ENCODE measurements at regions of chr16 and their contacts with region 1.

Region 1: DNA sequence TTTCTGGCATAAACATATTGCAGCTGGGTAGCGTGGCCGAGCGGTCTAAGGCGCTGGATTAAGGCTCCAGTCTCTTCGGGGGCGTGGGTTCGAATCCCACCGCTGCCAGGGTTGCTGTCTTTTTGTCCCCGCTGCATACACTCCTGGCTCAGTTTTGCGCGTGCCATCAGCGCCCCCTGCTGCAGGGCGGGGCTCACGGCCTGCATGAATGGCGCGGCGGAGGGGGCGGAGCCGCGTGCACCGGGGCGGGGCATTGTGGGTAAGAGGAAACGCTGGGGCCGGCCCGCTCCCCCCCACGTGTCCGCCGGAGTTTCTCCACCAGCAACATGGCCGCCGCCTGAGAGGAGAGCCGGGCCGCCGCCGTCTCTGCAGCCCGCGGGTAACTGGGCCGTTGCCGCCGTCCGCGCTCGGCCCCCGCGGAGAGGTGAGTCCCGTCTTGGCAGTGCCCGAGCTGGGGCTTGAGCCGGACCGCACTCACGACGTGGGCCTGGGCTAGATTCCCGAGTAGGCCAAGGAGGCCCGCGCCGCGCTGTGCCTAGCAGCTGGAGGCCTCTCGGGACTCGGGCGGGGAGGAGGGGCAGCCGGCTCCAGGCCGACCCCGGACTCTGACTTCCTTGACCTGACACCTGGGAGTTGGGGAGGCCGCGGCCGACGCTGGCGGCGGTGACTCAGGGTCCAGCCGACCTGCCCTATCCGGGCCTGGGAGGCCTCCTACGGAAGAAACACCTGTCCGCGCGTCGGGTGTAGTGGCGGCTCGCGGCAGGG is at the start of gene POLR3E:
- DNase-seq: peak; percentile 100
- H3K4me3 Mint-ChIP-seq: peak within 1 kb of the TSS; percentile 94
- H3K27ac Mint-ChIP-seq: peak within 1 kb of the TSS; percentile 90
- H3K4me1 Mint-ChIP-seq: peaks cover 45% of the 10 kb centered on the region
- H3K27me3 Mint-ChIP-seq: peaks cover 3% of the 10 kb centered on the region
- total RNA-seq, gene POLR3E: 107 and 111 TPM in 2 replicates

Region 2: GRCh38 chr16:20971401-20971800 is 1325.9 kb before region 1 on chr16:
- intact Hi-C with region 1: no loop called
- DNase-seq: no peak
- H3K4me3 Mint-ChIP-seq: no peak overlapping the region
- H3K27ac Mint-ChIP-seq: no peak overlapping the region
- H3K4me1 Mint-ChIP-seq: no peaks in the 10 kb centered on the region
- H3K27me3 Mint-ChIP-seq: peaks cover 11% of the 10 kb centered on the region

Region 3: DNA sequence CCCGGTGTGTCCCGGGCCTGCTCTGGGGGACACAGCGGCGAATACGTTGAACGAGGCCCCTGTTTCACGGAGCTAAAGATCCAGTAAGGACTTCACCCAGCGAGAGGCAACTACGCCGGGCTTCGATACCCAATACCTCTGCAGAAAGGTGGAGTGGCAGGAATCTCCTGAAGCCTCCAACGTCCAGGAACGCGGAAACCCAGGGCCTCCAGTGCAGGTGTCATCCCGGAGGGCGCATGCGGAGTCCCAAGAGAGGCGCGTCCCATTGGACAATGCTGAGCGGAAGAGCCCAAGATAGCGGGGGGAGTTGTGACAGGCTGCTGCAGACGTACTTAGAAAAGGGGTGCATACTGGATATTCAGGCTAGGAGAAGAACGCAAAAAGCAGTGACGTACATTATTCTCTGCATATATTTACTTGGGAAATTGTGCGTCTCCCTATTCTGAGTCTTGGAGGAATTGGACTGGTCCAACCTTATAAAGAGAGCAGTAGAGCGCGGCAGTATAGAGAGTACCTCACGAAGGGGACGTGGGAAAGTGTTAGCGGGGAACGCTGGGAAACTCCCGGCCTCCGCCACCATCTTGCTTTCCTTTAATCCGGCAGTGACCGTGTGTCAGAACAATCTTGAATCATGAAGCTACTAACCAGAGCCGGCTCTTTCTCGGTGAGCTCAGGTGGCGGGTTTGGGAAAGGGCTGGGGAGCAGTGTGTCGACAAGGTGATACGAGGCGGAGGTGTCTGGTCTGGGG is 344.3 kb before region 1 on chr16 and contains the start of gene UQCRC2:
- intact Hi-C with region 1: loop called (anchors 1 kb)
- DNase-seq: peak; percentile 85
- H3K4me3 Mint-ChIP-seq: peak within 1 kb of the TSS; percentile 99
- H3K27ac Mint-ChIP-seq: peak within 1 kb of the TSS; percentile 95
- H3K4me1 Mint-ChIP-seq: peaks cover 50% of the 10 kb centered on the region
- H3K27me3 Mint-ChIP-seq: no peaks in the 10 kb centered on the region
- total RNA-seq, gene UQCRC2: 235 and 260 TPM in 2 replicates

Region 4: GRCh38 chr16:22007509-22008214 is 289.6 kb before region 1 on chr16 and contains the start of gene MOSMO:
- intact Hi-C with region 1: loop called (anchors 1 kb)
- DNase-seq: peak; percentile 62
- H3K4me3 Mint-ChIP-seq: peak within 1 kb of the TSS; percentile 92
- H3K27ac Mint-ChIP-seq: peak within 1 kb of the TSS; percentile 79
- H3K4me1 Mint-ChIP-seq: peaks cover 49% of the 10 kb centered on the region
- H3K27me3 Mint-ChIP-seq: peaks cover 10% of the 10 kb centered on the region
- total RNA-seq, gene MOSMO: 12.7 and 16.3 TPM in 2 replicates

Region 5: GRCh38 chr16:22141746-22142145 is 155.6 kb before region 1 on chr16:
- intact Hi-C with region 1: no loop called
- DNase-seq: no peak
- H3K4me3 Mint-ChIP-seq: no peak overlapping the region
- H3K27ac Mint-ChIP-seq: no peak overlapping the region
- H3K4me1 Mint-ChIP-seq: no peaks in the 10 kb centered on the region
- H3K27me3 Mint-ChIP-seq: peaks cover 5% of the 10 kb centered on the region

Region 6: GRCh38 chr16:22232277-22233042 is 64.8 kb before region 1 on chr16:
- intact Hi-C with region 1: loop called (anchors 2 kb)
- DNase-seq: no peak
- H3K4me3 Mint-ChIP-seq: peak overlapping the region; percentile 13
- H3K27ac Mint-ChIP-seq: peak overlapping the region; percentile 14
- H3K4me1 Mint-ChIP-seq: peaks cover 13% of the 10 kb centered on the region
- H3K27me3 Mint-ChIP-seq: no peaks in the 10 kb centered on the region

Region 7: DNA sequence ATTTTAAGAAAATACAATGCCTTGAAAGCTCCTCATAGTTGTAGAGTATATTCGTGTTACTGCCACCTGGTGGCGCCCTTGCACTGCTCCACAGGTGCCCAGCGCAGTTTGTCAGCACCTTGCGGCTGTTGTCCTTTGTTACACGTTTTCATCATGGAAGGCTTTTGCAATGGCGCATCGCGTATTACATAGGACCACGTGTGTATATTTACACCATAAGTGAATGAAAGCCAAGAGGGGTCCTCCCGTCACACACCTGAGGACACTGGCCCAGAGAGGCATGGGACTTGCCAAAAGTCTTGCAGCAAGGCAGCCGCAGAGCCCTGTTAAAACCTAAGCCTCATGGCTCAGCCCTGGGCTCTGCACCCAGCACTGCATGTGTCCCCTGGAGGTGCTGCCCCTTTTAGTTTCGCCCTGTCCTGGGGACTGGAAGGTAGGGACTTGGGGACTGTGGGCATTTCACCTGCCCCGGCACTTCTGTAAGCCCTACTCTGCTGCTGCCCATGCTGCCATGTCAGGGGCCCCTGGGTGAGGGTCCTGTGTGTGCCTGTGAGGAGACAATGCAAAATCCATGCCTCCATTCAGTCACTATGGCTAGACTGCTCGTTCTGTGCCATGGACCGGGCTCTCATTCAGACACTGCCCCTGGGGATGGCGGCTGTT is 24.2 kb after region 1 on chr16:
- intact Hi-C with region 1: loop called (anchors 2 kb)
- DNase-seq: peak; percentile 57
- H3K4me3 Mint-ChIP-seq: no peak overlapping the region
- H3K27ac Mint-ChIP-seq: peak overlapping the region; percentile 48
- H3K4me1 Mint-ChIP-seq: no peaks in the 10 kb centered on the region
- H3K27me3 Mint-ChIP-seq: no peaks in the 10 kb centered on the region

Region 8: GRCh38 chr16:22374311-22375116 is 77.2 kb after region 1 on chr16 and contains the start of gene CDR2:
- intact Hi-C with region 1: loop called (anchors 1 kb)
- DNase-seq: peak; percentile 99
- H3K4me3 Mint-ChIP-seq: peak within 1 kb of the TSS; percentile 97
- H3K27ac Mint-ChIP-seq: peak within 1 kb of the TSS; percentile 91
- H3K4me1 Mint-ChIP-seq: peaks cover 44% of the 10 kb centered on the region
- H3K27me3 Mint-ChIP-seq: peaks cover 2% of the 10 kb centered on the region
- total RNA-seq, gene CDR2: 43.5 and 47.2 TPM in 2 replicates